ENCODE measurements at regions of chr1 and their contacts with region 1.

Region 1: GRCh38 chr1:1063945-1064831 is 9.9 kb downstream of the RNF223 start:
- DNase-seq: peak; percentile 68 to 93 (median 75)
- H3K4me3 ChIP-seq: no peak overlapping the region
- H3K4me3 Mint-ChIP-seq: peak overlapping the region in 4 of 7 donors; percentile 18 to 60 (median 45)
- H3K27ac ChIP-seq: peak overlapping the region; percentile 31
- H3K27ac Mint-ChIP-seq: peak overlapping the region in 4 of 8 donors; percentile 43 to 72 (median 53)
- H3K4me1 ChIP-seq: peaks cover 27% of the 10 kb centered on the region
- H3K4me1 Mint-ChIP-seq: peaks cover 0 to 20% (median 2%) of the 10 kb centered on the region in 3 donors
- H3K27me3 ChIP-seq: peaks cover 11% of the 10 kb centered on the region
- H3K27me3 Mint-ChIP-seq: peaks cover 5 to 12% of the 10 kb centered on the region in 2 donors

Region 2: DNA sequence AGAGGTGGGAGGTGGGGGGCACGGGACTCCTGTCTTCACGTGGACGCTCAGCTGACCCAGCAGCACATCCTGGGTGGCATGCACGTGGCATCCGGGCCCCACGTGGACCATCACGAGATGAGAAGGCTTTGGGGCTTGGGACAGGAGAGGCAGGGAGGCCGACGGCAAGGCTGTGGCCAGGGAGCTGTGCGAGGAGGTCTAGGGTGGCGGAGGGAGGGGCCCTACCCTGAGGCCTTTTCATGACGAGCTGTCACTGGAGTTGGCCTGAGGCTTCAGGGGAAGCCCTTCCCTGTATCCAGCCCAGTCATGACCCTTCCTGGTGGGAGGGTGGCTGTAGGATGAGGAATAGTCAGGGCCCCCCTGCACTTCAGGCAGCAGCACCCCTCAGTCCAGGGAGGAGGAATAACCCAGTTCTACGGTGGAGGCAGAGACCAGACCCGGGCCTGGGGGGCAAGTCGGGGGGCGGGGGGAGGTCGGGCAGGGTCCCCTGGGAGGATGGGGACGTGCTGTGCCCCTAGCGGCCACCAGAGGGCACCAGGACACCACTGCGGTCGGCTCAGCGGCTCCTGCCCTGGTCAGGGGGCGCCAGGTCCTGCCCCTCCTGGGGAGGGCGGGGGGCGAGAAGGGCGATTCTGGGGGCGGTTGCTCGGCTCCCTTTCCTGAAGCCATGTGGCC is 80.3 kb before region 1 on chr1:
- CTCF ChIA-PET with region 1: interaction called, 63 read pairs
- POLR2A ChIA-PET with region 1: no interaction called
- DNase-seq: peak; percentile 47 to 75 (median 53)
- H3K4me3 ChIP-seq: no peak overlapping the region
- H3K4me3 Mint-ChIP-seq: no peak overlapping the region
- H3K27ac ChIP-seq: no peak overlapping the region
- H3K27ac Mint-ChIP-seq: no peak overlapping the region
- H3K4me1 ChIP-seq: no peaks in the 10 kb centered on the region
- H3K4me1 Mint-ChIP-seq: no peaks in the 10 kb centered on the region
- H3K27me3 ChIP-seq: peaks cover 3% of the 10 kb centered on the region
- H3K27me3 Mint-ChIP-seq: peaks cover 22 to 43% of the 10 kb centered on the region in 2 donors

Region 3: DNA sequence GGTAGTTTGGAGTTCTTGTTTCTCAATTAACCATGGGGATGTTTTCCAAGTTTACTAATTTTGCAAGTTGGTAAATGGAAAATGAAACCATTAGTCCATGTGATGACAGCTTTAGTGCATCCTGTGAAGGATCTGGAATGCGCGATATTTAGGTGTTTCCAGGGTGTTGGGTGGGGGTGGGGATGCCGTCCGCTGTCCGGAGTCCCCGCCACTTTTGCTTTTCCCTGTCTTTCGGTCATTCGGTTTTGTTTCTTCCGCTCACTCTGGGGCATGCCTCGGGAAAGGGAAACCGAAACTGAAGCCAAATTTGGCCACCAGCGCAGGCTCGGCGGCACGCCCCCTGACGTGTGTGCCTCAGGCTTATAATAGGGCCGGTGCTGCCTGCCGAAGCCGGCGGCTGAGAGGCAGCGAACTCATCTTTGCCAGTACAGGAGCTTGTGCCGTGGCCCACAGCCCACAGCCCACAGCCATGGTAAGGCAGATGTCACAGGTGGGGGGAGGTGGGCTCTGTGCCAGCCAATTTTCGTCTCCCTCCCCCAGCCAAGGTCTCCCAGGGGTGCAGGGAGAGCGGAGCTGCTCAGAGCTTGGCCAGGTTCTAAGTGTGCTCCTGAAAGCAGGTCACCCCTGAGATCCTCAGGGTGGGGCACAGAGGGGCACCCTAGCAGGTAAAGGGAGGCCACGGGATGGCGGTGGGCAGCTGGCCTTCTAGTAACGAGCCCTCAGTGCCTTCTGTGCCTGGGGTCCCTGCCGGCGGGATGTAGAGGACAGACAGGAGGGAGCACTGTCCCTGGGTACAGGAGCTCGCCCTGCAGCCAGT is 50.9 kb before region 1 on chr1 and contains the start of gene ISG15:
- CTCF ChIA-PET with region 1: interaction called, 18 read pairs
- POLR2A ChIA-PET with region 1: interaction called, 3 read pairs
- DNase-seq: peak; percentile 84 to 94 (median 87)
- H3K4me3 ChIP-seq: peak within 1 kb of the TSS; percentile 87
- H3K4me3 Mint-ChIP-seq: peak within 1 kb of the TSS; percentile 94 to 99 (median 97)
- H3K27ac ChIP-seq: peak within 1 kb of the TSS; percentile 83
- H3K27ac Mint-ChIP-seq: peak within 1 kb of the TSS; percentile 93 to 99 (median 98)
- H3K4me1 ChIP-seq: peaks cover 21% of the 10 kb centered on the region
- H3K4me1 Mint-ChIP-seq: peaks cover 23 to 38% (median 26%) of the 10 kb centered on the region in 3 donors
- H3K27me3 ChIP-seq: no peaks in the 10 kb centered on the region
- H3K27me3 Mint-ChIP-seq: peaks cover 3 to 12% of the 10 kb centered on the region in 2 donors
- total RNA-seq, gene ISG15: 16.9 to 20.4 TPM

Region 4: DNA sequence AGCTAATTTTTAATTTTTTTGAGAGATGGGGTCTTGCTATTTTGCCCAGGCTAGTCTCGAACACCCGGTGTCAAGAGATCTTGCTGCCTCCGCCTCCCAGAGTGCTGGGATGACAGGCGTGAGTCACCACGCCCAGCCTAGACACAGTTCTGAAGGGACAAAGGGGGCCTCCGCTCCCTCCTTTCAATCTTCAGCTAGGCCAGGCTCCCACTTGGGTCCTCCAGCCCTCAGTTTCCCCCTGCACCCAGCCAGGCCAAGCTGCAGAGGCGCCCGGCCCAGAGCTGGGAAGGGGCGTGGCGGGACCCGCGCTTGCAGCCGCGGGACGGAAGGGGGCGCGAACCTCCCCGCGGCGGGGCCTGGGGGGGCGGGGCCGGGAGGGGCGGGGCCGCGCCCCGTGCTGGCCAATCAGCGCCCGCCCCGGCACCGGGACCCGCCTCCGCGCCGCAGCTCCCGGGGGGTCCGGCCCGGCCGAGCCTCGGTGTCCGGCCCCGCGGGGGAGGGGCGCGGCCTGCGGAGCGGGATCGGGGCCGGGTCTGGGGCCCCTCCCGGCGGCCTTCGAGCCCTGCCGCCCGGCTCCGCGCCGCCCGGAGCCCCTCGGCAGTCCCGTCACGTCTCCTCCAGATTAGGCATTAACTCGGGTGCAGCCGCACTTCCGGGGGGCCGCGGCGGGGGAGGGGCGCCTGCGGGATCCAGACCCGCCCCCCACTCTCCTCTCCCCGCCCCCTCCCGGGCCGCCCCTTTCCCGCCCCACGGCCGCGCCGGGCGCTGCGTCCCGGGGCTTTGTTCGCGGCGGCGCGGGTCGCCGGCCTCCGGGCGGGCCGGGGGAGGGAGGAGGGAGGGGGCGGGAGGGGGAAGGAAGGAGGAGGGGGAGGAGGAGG is 44.8 kb before region 1 on chr1:
- CTCF ChIA-PET with region 1: interaction called, 18 read pairs
- POLR2A ChIA-PET with region 1: interaction called, 3 read pairs
- DNase-seq: peak; percentile 73 to 82 (median 74)
- H3K4me3 ChIP-seq: no peak overlapping the region
- H3K4me3 Mint-ChIP-seq: peak overlapping the region in 6 of 7 donors; percentile 49 to 84 (median 64)
- H3K27ac ChIP-seq: no peak overlapping the region
- H3K27ac Mint-ChIP-seq: peak overlapping the region in 1 of 8 donors; percentile 73
- H3K4me1 ChIP-seq: peaks cover 20% of the 10 kb centered on the region
- H3K4me1 Mint-ChIP-seq: peaks cover 9 to 25% (median 13%) of the 10 kb centered on the region in 3 donors
- H3K27me3 ChIP-seq: no peaks in the 10 kb centered on the region
- H3K27me3 Mint-ChIP-seq: peaks cover 0 to 3% of the 10 kb centered on the region in 2 donors